ENCODE measurements at regions of chr5 and their contacts with region 1.

Region 1: GRCh38 chr5:78537821-78538220 is 110.8 kb downstream of the LHFPL2 start:
- DNase-seq: no peak
- H3K4me3 ChIP-seq: no peak overlapping the region
- CTCF ChIP-seq: peak; percentile 57

Region 2: GRCh38 chr5:78467752-78468357 is 70.0 kb before region 1 on chr5:
- CTCF ChIA-PET with region 1: interaction called, 18 read pairs
- POLR2A ChIA-PET with region 1: no interaction called
- DNase-seq: no peak
- H3K4me3 ChIP-seq: no peak overlapping the region
- CTCF ChIP-seq: peak; percentile 43

Region 3: GRCh38 chr5:78610163-78610583 is 72.4 kb after region 1 on chr5:
- CTCF ChIA-PET with region 1: interaction called, 13 read pairs
- POLR2A ChIA-PET with region 1: no interaction called
- DNase-seq: no peak
- H3K4me3 ChIP-seq: no peak overlapping the region
- CTCF ChIP-seq: peak; percentile 0

Region 4: DNA sequence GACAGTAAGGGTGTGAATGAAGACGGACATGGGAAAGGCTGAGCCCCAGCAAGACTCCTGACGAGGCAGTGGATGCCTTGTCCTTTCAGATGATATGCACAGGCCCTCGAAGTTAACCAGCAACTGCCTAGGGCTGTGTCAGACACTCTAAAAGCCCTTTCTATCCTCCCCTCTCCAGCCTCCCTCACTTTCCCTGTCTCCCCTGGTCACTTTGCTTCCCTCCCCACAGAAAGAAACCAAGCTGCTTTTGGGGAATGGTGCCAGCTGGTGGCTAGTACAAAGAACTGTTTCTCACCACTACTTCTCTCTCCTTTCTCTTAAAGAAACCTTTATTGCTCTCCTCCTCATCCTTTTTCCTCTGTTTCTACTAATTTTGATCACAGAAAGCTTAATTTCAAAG is 89.4 kb after region 1 on chr5:
- CTCF ChIA-PET with region 1: interaction called, 16 read pairs
- POLR2A ChIA-PET with region 1: no interaction called
- DNase-seq: no peak
- H3K4me3 ChIP-seq: no peak overlapping the region
- CTCF ChIP-seq: peak; percentile 42

Region 5: GRCh38 chr5:78638423-78638822 is 100.6 kb after region 1 on chr5:
- CTCF ChIA-PET with region 1: interaction called, 14 read pairs
- POLR2A ChIA-PET with region 1: no interaction called
- DNase-seq: peak; percentile 59
- H3K4me3 ChIP-seq: no peak overlapping the region
- CTCF ChIP-seq: no peak

Region 6: GRCh38 chr5:78886341-78887230 is 348.8 kb after region 1 on chr5:
- CTCF ChIA-PET with region 1: interaction called, 17 read pairs
- POLR2A ChIA-PET with region 1: no interaction called
- DNase-seq: no peak
- H3K4me3 ChIP-seq: no peak overlapping the region
- CTCF ChIP-seq: peak; percentile 27